ENCODE measurements at regions of chr11 and their contacts with region 1.

Region 1: DNA sequence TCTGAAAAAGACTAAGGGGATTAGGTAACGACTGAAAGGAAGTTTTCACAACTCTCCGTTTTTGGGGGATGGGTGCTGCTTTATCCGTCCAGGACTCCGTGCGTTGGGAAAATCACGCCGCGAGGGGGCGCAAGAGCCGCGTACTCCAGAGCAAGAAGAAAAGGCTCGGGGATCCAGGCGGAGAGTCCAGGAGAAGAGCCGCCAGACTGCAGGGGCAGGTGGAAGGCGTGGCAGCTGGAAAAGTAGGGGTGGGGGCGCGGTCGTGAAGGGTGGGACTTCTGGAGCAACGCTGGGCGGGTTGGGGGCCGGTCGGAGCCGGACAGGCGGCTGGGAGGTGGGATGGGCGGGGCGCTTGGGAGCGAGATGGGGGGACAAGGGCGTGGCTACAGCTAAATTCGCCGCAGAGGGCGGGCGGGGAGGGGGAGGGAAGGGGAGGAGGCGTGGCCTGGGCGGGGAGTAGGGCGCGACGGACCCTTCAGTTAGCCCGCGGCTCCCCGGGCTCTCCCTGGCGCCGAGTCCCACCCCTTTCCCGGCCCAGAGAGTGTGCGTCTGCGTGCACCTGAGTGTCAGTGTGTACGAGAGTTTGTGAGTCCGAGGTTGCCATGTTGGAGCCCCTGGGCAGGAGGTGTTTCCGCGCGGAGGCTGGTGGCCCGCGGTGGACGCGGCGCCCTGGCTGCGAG is 613 bp upstream of the ARHGEF17 start:
- DNase-seq: peak; percentile 98 to 100 (median 99)
- ATAC-seq: peak; percentile 66 to 69
- H3K4me3 ChIP-seq: peak overlapping the region; percentile 76
- H3K27ac ChIP-seq: peak overlapping the region; percentile 92
- H3K4me1 ChIP-seq: peaks cover 5% of the 10 kb centered on the region
- H3K27me3 ChIP-seq: no peaks in the 10 kb centered on the region

Region 2: GRCh38 chr11:73177778-73178577 is 129.5 kb before region 1 on chr11:
- intact Hi-C with region 1: no loop called
- DNase-seq: peak; percentile 91 to 95 (median 94)
- ATAC-seq: peak; percentile 83 to 85
- H3K4me3 ChIP-seq: no peak overlapping the region
- H3K27ac ChIP-seq: peak overlapping the region; percentile 77
- H3K4me1 ChIP-seq: peaks cover 21% of the 10 kb centered on the region
- H3K27me3 ChIP-seq: no peaks in the 10 kb centered on the region

Region 3: DNA sequence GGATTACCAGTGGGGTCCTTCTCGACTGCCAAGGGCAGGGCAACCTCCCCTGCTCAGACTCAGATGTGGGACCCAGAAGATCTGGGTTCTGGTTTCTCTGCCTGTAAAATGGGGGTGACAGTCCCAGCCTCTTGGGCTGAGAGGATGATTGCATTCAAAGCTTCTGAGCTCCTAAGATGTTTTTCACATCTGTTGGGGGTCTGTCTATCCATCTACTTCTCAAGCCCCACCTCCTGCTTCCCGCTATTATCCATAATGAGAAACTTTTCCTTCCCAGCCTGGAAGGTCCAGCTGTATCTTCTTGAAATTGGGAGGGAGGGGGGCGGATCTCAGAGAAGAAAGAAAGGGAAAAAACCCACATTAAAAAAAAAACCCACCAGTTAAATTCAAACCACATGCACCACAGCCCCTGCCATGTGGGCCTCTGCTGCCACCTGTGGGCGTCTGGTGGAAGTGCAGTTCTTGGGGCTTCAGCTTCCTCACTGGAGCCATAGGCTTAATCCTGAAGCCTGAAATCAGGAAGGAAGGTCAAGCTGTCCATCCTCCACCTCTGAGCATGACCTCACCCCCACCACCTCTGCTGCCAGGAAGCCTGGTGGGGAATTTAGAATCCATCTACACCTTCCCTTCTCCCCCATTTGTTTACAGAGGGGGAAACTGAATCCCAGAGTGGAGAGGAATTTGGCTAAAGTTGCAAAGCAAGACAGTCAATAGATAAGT is 27.9 kb after region 1 on chr11:
- intact Hi-C with region 1: loop called (anchors 1 to 2 kb)
- DNase-seq: peak; percentile 79 to 93 (median 90)
- ATAC-seq: peak; percentile 66
- H3K4me3 ChIP-seq: no peak overlapping the region
- H3K27ac ChIP-seq: peak overlapping the region; percentile 91
- H3K4me1 ChIP-seq: peaks cover 31% of the 10 kb centered on the region
- H3K27me3 ChIP-seq: no peaks in the 10 kb centered on the region